ENCODE measurements at regions of chr11 and their contacts with region 1.

Region 1: DNA sequence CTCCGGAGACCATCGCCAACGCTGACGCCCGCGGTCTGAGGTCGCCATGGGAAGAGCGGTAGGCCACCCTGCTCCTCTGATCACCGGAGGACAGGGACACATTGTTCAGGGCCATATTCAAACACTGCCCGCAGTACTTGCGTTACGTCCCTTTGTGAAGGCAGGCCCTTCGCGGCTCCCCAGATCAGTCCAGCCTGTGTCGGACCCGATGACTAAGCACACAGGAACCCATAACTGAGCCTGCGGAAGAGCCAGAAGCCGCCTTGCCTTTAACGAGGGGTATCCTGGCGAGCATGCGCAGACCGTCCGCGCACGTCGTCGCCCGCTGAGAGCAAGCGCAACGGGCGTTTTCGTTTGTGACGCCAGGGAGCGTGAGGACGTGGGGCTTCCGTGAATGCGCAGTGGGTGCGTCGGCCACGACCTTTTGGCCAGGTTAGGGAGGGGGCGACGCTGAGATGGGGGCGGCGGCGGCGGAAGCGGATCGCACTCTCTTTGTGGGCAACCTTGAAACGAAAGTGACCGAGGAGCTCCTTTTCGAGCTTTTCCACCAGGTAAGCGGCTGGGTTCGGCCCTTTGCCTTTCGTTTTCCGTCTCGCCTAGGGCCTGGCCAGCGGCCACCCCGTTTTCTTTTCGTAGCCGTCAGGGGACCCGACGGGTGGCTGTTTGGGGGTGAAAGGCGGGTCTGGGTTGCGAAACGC is at the starts of genes C11orf71 and RBM7:
- DNase-seq: peak; percentile 99
- H3K4me3 Mint-ChIP-seq: peak within 1 kb of the TSS; percentile 92
- H3K27ac Mint-ChIP-seq: peak within 1 kb of the TSS; percentile 99
- H3K4me1 Mint-ChIP-seq: peaks cover 39% of the 10 kb centered on the region
- H3K27me3 Mint-ChIP-seq: peaks cover 2% of the 10 kb centered on the region
- total RNA-seq, gene C11orf71: 6.4 and 6.8 TPM in 2 replicates
- total RNA-seq, gene RBM7: 40.1 and 42.5 TPM in 2 replicates

Region 2: GRCh38 chr11:113875234-113876073 is 524.9 kb before region 1 on chr11 and contains the start of gene USP28:
- intact Hi-C with region 1: loop called (anchors 1 kb)
- DNase-seq: peak; percentile 95
- H3K4me3 Mint-ChIP-seq: peak within 1 kb of the TSS; percentile 91
- H3K27ac Mint-ChIP-seq: peak within 1 kb of the TSS; percentile 96
- H3K4me1 Mint-ChIP-seq: peaks cover 47% of the 10 kb centered on the region
- H3K27me3 Mint-ChIP-seq: no peaks in the 10 kb centered on the region
- total RNA-seq, gene USP28: 34.8 and 36.2 TPM in 2 replicates

Region 3: GRCh38 chr11:114348200-114349191 is 51.9 kb before region 1 on chr11:
- intact Hi-C with region 1: loop called (anchors 2 kb)
- DNase-seq: peak; percentile 82
- H3K4me3 Mint-ChIP-seq: no peak overlapping the region
- H3K27ac Mint-ChIP-seq: no peak overlapping the region
- H3K4me1 Mint-ChIP-seq: peaks cover 5% of the 10 kb centered on the region
- H3K27me3 Mint-ChIP-seq: no peaks in the 10 kb centered on the region

Region 4: GRCh38 chr11:114439229-114440120 is 39.1 kb after region 1 on chr11 and contains the start of gene REXO2:
- intact Hi-C with region 1: loop called (anchors 1 kb)
- DNase-seq: peak; percentile 98
- H3K4me3 Mint-ChIP-seq: peak within 1 kb of the TSS; percentile 99
- H3K27ac Mint-ChIP-seq: peak within 1 kb of the TSS; percentile 95
- H3K4me1 Mint-ChIP-seq: peaks cover 38% of the 10 kb centered on the region
- H3K27me3 Mint-ChIP-seq: peaks cover 3% of the 10 kb centered on the region
- total RNA-seq, gene REXO2: 98.6 and 99.5 TPM in 2 replicates

Measured in activated CD4-positive, alpha-beta T cell treated with anti-CD3 and anti-CD28 coated beads, Interleukin-2, amount 10 ng/mL, durations not matched to agents 24 days and 14 days (primary cell).